Left ventricle myocardium inferior (tissue), 1 donor: ENCODE measurements at regions of chr14 and their contacts with region 1.

Region 1: GRCh38 chr14:64340560-64341196 is 46.5 kb upstream of the ESR2 start:
- DNase-seq: no peak
- H3K4me3 ChIP-seq: no peak overlapping the region
- H3K27ac ChIP-seq: no peak overlapping the region
- H3K4me1 ChIP-seq: peaks cover 22% of the 10 kb centered on the region
- H3K27me3 ChIP-seq: no peaks in the 10 kb centered on the region
- CTCF ChIP-seq: no peak

Region 2: GRCh38 chr14:64266239-64266638 is 74.4 kb before region 1 on chr14:
- intact Hi-C with region 1: no loop called
- DNase-seq: no peak
- H3K4me3 ChIP-seq: no peak overlapping the region
- H3K27ac ChIP-seq: no peak overlapping the region
- H3K4me1 ChIP-seq: no peaks in the 10 kb centered on the region
- H3K27me3 ChIP-seq: no peaks in the 10 kb centered on the region
- CTCF ChIP-seq: no peak

Region 3: DNA sequence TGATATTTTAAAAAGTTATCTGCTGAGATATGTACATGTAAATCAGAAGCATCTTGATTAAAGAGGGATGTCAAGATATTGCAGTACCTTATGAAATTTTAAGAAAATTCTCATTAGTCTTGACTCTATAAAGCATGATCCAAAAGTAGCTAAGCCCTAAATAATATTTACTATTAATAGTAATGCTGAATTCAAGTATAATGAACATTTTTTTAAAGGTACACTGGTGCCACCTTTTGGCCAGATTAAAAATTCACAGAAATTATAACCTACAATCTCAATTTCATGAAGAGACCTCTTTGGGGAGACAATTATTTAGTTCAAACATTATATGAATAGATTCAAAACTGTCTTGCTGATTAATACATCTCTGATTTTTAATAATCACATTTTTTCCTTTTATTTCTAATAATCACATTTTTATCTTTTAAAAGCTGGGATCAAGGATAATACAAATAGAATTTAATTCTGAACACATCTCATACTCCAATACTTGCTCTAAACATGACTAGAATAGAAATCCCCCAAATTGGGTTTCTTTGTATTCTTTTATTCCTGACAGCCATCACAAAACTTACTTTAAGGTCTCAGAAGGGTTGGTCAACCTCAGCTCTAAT is 138.1 kb after region 1 on chr14:
- intact Hi-C with region 1: loop called (anchors 10 kb)
- DNase-seq: no peak
- H3K4me3 ChIP-seq: no peak overlapping the region
- H3K27ac ChIP-seq: no peak overlapping the region
- H3K4me1 ChIP-seq: no peaks in the 10 kb centered on the region
- H3K27me3 ChIP-seq: no peaks in the 10 kb centered on the region
- CTCF ChIP-seq: peak; percentile 57

Region 4: GRCh38 chr14:64636208-64636979 is 295.7 kb after region 1 on chr14:
- intact Hi-C with region 1: loop called (anchors 10 kb)
- DNase-seq: peak; percentile 63
- H3K4me3 ChIP-seq: no peak overlapping the region
- H3K27ac ChIP-seq: no peak overlapping the region
- H3K4me1 ChIP-seq: no peaks in the 10 kb centered on the region
- H3K27me3 ChIP-seq: no peaks in the 10 kb centered on the region
- CTCF ChIP-seq: peak; percentile 94